ENCODE measurements at regions of chr20 and their contacts with region 1.

Region 1: GRCh38 chr20:50987592-50988210 is 29.1 kb downstream of the MOCS3 start:
- DNase-seq: peak in 7 of 10 donors; percentile 52 to 80 (median 67)
- H3K4me3 ChIP-seq: peak overlapping the region in 4 of 59 donors; percentile 8 to 30 (median 25)
- H3K27ac ChIP-seq: no peak overlapping the region
- H3K27me3 ChIP-seq: peaks cover 0 to 47% (median 10%) of the 10 kb centered on the region in 45 donors
- CTCF ChIP-seq: peak; percentile 61 to 96 (median 91)

Region 2: DNA sequence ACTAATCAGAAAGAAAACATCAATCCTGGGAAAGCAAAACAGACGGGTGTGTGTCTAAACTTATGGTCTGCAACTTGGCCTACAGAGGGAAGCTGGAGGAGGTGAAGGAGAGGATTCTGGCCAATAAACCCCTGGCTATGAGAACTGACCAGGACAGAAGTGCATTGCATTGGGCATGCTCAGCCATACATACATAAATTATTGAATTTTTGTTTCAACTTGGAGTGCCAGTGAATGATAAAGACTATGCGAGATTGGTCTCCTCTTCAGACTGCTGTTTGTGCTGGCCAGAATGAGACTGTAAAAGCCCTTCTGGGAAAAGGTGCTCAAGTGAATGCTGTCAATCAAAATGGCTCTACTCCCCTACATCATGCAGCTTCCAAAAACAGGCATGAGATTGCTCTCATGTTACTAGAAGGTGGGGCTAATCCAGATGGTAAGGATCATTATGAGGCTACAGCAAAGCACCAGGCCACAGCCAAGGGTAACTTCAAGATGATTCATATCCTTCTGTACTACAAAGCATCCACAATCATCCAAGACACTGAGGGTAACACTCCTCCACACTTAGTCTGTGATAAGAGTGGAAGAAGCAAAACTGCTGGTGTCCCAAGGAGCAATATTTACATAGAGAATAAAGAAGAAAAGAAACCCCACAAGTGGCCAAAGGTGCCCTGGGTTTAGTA is 73.9 kb before region 1 on chr20:
- intact Hi-C with region 1: no loop called
- DNase-seq: no peak
- H3K4me3 ChIP-seq: no peak overlapping the region
- H3K27ac ChIP-seq: peak overlapping the region in 4 of 59 donors; percentile 10 to 45 (median 20)
- H3K27me3 ChIP-seq: no peaks in the 10 kb centered on the region
- CTCF ChIP-seq: no peak

Region 3: GRCh38 chr20:51211191-51211590 is 223.5 kb after region 1 on chr20:
- intact Hi-C with region 1: loop called in 1 of 2 experiments (anchors 10 kb)
- DNase-seq: no peak
- H3K4me3 ChIP-seq: no peak overlapping the region
- H3K27ac ChIP-seq: no peak overlapping the region
- H3K27me3 ChIP-seq: peaks cover 0 to 19% (median 0%) of the 10 kb centered on the region in 45 donors
- CTCF ChIP-seq: no peak

Region 4: DNA sequence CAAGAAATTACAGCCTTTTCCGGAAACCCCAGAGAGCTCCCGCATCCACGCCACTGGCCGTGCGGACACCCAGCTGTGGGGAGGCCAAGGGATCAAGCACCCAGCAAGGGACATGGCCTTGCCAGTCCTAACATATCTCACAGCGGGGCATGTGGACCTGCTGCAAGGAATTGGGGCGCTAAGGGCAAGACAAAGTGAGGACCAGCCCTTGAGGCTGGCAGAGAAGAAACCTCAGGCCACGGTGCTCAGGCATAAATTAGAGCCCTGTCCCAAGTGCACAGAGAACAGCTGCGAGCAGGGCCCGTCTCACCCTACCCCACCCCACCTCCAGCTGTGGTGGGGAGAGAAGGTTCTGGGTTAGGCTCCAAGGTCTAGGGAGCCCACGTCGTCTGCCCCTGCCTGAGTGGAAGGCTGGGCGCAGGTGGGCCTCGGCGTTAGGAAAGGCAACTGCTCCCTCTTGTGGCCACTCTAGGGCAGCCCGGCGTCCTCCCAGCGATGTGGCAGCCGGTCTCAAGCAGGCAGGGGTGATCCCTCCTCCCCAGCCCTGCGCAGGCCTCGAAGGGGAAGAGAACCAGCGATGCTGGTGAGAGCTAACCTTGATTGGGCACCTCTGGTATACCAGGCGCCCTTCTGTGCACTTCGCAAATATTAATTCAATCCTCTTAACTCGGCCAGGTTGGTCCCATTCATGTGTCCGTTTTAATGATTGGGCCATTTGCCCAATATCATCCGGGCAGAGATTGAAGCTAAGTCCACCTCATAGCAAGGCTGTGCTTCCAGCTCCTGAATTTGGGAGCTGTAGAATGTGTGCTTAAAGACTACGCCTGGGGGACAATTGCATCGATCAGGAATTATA is 319.0 kb after region 1 on chr20:
- intact Hi-C with region 1: loop called (anchors 2 kb)
- DNase-seq: peak; percentile 66 to 87 (median 80)
- H3K4me3 ChIP-seq: peak overlapping the region in 17 of 59 donors; percentile 0 to 52 (median 19)
- H3K27ac ChIP-seq: peak overlapping the region in 4 of 59 donors; percentile 12 to 41 (median 22)
- H3K27me3 ChIP-seq: peaks cover 0 to 3% (median 0%) of the 10 kb centered on the region in 45 donors
- CTCF ChIP-seq: peak; percentile 63 to 100 (median 95)

Region 5: GRCh38 chr20:51595058-51595532 is 607.4 kb after region 1 on chr20:
- intact Hi-C with region 1: loop called (anchors 10 kb)
- DNase-seq: peak; percentile 78 to 95 (median 89)
- H3K4me3 ChIP-seq: peak overlapping the region in 12 of 59 donors; percentile 5 to 30 (median 20)
- H3K27ac ChIP-seq: peak overlapping the region in 44 of 59 donors; percentile 1 to 75 (median 47)
- H3K27me3 ChIP-seq: no peaks in the 10 kb centered on the region
- CTCF ChIP-seq: peak; percentile 75 to 95 (median 89)

Region 6: GRCh38 chr20:52083627-52084232 is 1096.0 kb after region 1 on chr20:
- intact Hi-C with region 1: loop called in 1 of 2 experiments (anchors 10 kb)
- DNase-seq: peak in 8 of 10 donors; percentile 49 to 83 (median 64)
- H3K4me3 ChIP-seq: no peak overlapping the region
- H3K27ac ChIP-seq: no peak overlapping the region
- H3K27me3 ChIP-seq: no peaks in the 10 kb centered on the region
- CTCF ChIP-seq: peak in 55 of 56 donors; percentile 24 to 83 (median 66)